Left ventricle myocardium inferior (tissue), 1 donor: ENCODE measurements at regions of chr6 and their contacts with region 1.

Region 1: DNA sequence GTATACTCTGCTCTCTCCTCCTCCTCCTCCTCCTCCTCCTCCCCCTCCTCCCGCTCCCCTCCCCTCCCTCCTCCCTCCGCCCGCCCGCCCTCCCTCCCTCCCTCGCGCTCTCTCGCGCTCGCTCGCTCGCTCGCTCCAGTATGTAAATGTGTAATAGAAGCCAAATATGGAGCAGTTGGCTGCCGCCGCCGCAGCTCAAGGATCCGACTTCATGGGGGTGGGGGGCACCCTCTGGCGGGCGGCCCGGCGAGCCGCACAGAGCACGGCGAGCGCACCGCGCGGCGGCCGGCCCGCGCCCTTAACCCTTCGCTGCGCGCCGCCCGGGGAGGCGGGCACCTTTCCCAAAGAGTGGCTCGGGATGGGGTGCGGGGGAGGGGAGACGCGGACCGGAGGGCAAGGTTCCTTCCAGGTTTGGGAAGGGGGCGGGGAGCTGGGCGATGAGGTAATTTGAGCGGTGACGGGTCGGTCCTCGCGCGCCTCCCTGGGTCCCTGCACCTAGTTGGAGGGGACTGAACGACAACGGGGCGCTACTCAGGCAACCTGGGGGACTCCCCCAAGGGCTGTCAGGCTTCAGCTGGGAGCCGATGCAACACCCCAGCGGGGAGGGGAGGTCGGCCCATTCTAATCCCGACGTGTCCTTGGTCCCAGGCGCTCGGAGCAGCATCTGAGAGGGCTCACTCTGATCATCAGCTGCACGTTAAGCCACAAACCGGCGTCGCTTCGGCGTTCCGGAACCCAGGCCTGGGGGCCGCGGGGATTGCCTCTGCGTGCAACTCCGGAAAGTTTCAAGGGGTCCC is 409 bp upstream of the ATXN1 start:
- DNase-seq: peak; percentile 86
- H3K4me3 ChIP-seq: peak overlapping the region; percentile 97
- H3K27ac ChIP-seq: peak overlapping the region; percentile 99
- H3K4me1 ChIP-seq: peaks cover 80% of the 10 kb centered on the region
- H3K27me3 ChIP-seq: no peaks in the 10 kb centered on the region
- CTCF ChIP-seq: peak; percentile 45

Region 2: GRCh38 chr6:16332175-16332542 is 429.5 kb before region 1 on chr6:
- intact Hi-C with region 1: loop called (anchors 5 kb)
- DNase-seq: peak; percentile 75
- H3K4me3 ChIP-seq: no peak overlapping the region
- H3K27ac ChIP-seq: peak overlapping the region; percentile 4
- H3K4me1 ChIP-seq: peaks cover 62% of the 10 kb centered on the region
- H3K27me3 ChIP-seq: no peaks in the 10 kb centered on the region
- CTCF ChIP-seq: peak; percentile 91

Region 3: GRCh38 chr6:16409531-16410441 is 351.9 kb before region 1 on chr6:
- intact Hi-C with region 1: loop called (anchors 5 kb)
- DNase-seq: peak; percentile 57
- H3K4me3 ChIP-seq: no peak overlapping the region
- H3K27ac ChIP-seq: no peak overlapping the region
- H3K4me1 ChIP-seq: peaks cover 42% of the 10 kb centered on the region
- H3K27me3 ChIP-seq: no peaks in the 10 kb centered on the region
- CTCF ChIP-seq: peak; percentile 86

Region 4: GRCh38 chr6:16511723-16512489 is 249.8 kb before region 1 on chr6:
- intact Hi-C with region 1: loop called (anchors 2 kb)
- DNase-seq: no peak
- H3K4me3 ChIP-seq: no peak overlapping the region
- H3K27ac ChIP-seq: no peak overlapping the region
- H3K4me1 ChIP-seq: peaks cover 41% of the 10 kb centered on the region
- H3K27me3 ChIP-seq: no peaks in the 10 kb centered on the region
- CTCF ChIP-seq: no peak

Region 5: DNA sequence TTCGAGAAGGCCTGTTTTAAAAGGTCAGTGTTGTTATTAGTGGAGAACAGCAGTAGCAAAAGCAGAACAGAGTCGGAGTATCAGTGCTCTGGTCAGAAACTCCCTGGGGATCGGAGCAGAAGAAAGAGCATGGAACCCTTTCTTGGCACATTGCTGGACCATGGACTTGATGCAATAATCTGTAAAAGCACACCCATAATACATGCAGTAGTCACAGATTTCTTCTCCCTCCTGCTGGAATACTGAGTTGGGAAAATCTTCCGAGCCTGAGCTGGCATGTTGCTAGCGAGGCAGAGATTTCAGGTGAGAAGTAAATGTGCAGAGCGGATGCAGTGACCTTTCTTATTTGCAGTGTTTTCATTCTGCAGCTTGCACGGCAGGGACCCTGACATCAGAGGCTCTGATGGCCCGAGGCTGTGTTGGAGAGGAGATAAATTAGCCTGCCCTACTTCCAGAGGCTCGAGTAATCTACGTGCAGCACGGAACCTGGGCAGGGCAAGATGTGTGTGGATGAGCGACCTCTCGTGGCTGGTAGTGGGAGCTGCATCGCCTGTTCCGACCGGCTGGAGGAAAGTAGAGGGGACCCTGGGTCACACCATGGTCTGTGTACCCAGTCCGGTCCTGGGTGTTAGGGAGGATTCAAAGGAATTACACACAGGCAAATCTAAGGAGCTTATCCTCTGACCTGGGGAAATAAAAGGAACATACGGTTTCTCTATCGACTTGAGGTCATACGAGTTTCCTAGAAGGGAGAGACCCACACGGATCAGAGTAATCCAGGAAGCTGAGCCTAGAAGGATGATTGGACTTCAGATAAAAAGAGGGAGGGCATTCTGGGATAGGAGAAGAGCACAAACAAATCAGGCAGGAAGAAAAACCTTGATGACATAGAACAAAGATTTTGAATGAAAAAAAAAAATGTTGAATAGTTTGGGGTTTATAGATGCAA is 203.2 kb after region 1 on chr6:
- intact Hi-C with region 1: loop called (anchors 10 kb)
- DNase-seq: peak; percentile 68
- H3K4me3 ChIP-seq: peak overlapping the region; percentile 12
- H3K27ac ChIP-seq: no peak overlapping the region
- H3K4me1 ChIP-seq: peaks cover 9% of the 10 kb centered on the region
- H3K27me3 ChIP-seq: peaks cover 15% of the 10 kb centered on the region
- CTCF ChIP-seq: peak; percentile 89